Posterior vena cava (tissue), 2 donors: ENCODE measurements at regions of chr18 and their contacts with region 1.

Region 1: DNA sequence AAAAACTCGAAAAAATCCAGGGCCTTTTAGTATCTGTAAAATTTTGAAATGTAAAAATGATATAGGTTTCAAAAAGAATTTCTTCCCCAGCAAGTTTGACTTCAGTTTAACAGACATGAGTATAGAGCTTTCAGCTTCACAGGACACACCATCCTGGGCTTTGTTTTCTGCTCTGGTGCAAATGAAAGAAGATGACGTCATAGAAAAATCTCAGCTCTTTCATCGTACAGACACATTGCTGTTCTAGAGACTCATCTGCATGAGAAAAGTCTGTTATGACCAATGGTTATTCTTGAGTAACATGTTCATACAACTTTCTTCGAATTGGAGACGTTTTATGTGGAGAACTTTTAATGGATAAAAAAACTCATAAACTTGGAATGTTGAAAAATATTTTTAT is 111.7 kb upstream of the DYNAP start:
- DNase-seq: no peak

Region 2: DNA sequence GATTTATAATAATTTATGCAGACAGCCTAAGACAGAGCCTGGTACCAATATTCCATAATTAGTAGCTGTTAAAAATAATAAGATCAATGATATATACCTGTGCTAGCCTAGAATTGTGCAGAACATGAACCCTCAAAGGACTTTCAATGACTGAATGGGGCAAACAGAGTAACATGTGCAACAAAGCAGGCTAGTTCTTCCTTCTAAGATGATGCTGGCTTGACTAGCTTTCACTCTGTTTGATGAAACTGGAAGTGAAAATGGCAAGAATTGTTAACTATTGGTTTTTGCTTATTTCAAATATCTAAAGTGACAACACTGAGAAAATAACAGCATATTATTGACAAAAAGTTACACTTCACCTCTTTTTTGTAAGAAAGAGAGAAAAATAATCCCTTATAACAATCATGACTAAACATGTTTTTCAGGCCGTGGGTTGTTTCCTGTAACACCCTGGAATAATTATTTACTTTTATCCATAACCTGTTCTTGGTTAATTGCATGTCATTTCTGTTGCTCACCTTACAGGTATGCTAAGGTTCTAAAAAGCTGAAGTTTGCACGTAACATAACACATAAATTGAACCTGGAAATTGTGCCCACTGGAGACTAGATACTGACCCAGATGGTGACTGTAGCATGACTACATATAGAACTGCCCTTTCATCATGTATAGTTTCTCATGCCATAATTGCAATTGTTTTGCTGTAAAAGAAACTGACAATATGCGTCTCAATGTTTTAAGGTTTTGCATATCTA is 12.9 kb before region 1 on chr18:
- intact Hi-C with region 1: loop called in 1 of 2 experiments (anchors 1 kb)
- DNase-seq: no peak